SK-N-SH (cell line): ENCODE measurements at regions of chr15 and their contacts with region 1.

Region 1: GRCh38 chr15:90221246-90221900 is 12.4 kb downstream of the CIB1 start:
- DNase-seq: peak; percentile 86
- H3K4me3 ChIP-seq: no peak overlapping the region
- H3K27ac ChIP-seq: peak overlapping the region in 1 of 2 experiments; percentile 47; a peak in 1 of 4 replicates
- H3K4me1 ChIP-seq: peaks cover 0 to 11% of the 10 kb centered on the region in 2 experiments; a peak in 1 of 4 replicates
- H3K27me3 ChIP-seq: no peaks in the 10 kb centered on the region
- CTCF ChIP-seq: peak; percentile 65
- EP300 ChIP-seq: no peak
- RAD21 ChIP-seq: peak; percentile 90

Region 2: GRCh38 chr15:89888214-89888804 is 333.1 kb before region 1 on chr15:
- CTCF ChIA-PET with region 1: no interaction called
- POLR2A ChIA-PET with region 1: no interaction called
- DNase-seq: no peak
- H3K4me3 ChIP-seq: no peak overlapping the region
- H3K27ac ChIP-seq: no peak overlapping the region
- H3K4me1 ChIP-seq: peaks cover 0 to 2% of the 10 kb centered on the region in 2 experiments; a peak in 1 of 4 replicates
- H3K27me3 ChIP-seq: no peaks in the 10 kb centered on the region
- CTCF ChIP-seq: peak; percentile 67
- EP300 ChIP-seq: no peak
- RAD21 ChIP-seq: peak; percentile 59

Region 3: DNA sequence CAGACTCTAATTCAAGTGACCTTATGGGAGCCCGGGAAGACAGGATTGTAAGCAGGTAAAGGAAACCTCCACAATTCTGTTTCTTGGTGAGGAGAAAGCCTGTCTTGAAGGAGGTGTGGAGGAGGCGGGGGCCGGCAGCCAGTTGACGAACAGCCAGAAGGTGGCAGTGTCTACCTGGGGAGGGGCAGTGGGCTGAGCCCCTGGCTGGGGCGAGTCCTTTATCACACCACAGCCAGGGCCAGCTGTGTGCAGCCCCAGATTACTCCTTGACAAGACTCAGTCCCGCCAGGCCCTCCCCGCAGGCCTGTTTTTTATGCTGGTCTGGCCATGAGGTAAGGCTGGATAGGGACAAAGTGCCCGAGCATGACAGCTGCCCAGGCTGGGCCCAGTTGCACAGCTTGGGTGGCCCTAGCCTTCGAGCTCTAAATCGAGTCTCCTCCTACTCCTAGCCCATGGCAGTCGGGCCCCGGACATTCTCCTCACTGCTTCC is 78.2 kb before region 1 on chr15:
- CTCF ChIA-PET with region 1: interaction called, 37 read pairs
- POLR2A ChIA-PET with region 1: no interaction called
- DNase-seq: peak; percentile 93
- H3K4me3 ChIP-seq: no peak overlapping the region
- H3K27ac ChIP-seq: peak overlapping the region in 1 of 2 experiments; percentile 73; a peak in 2 of 4 replicates
- H3K4me1 ChIP-seq: peaks cover 0 to 14% of the 10 kb centered on the region in 2 experiments; a peak in 1 of 4 replicates
- H3K27me3 ChIP-seq: no peaks in the 10 kb centered on the region
- CTCF ChIP-seq: peak; percentile 67
- EP300 ChIP-seq: peak in 1 of 2 experiments; percentile 91; a peak in 2 of 4 replicates
- RAD21 ChIP-seq: peak; percentile 93

Region 4: DNA sequence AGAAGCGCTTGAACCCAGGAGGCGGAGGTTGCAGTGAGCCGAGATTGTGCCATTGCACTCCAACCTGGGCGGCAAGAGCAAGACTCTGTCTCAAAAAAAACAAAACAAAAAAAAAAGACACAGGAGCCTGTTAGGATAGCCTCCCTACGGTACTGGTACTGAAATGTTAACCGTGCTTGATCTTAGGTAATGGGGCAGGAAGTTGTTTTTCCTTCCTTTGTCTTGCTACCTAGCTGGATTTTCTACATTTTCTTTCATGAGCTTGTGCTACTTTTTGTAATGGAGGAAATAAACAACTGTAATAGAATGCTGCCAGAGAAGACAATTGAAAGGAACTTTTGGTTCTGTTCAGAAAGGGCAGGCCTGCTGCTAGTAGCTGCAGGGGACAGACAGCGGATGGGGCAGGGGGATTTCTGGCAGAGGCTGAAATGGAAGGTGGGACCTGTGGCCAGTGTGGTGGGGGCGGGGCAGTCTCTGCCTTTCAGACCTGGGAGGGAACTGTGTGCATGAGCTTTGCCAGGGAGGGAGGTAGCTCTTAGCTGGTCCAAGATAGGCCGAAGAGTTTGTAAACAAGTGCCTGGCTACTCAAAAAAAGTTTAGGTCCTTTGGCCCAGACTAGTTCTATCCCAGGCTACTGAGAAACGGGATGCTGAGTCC is 69.3 kb before region 1 on chr15:
- CTCF ChIA-PET with region 1: interaction called, 27 read pairs
- POLR2A ChIA-PET with region 1: no interaction called
- DNase-seq: no peak
- H3K4me3 ChIP-seq: no peak overlapping the region
- H3K27ac ChIP-seq: no peak overlapping the region
- H3K4me1 ChIP-seq: peaks cover 0 to 22% of the 10 kb centered on the region in 2 experiments; a peak in 1 of 4 replicates
- H3K27me3 ChIP-seq: no peaks in the 10 kb centered on the region
- CTCF ChIP-seq: no peak
- EP300 ChIP-seq: no peak
- RAD21 ChIP-seq: no peak

Region 5: DNA sequence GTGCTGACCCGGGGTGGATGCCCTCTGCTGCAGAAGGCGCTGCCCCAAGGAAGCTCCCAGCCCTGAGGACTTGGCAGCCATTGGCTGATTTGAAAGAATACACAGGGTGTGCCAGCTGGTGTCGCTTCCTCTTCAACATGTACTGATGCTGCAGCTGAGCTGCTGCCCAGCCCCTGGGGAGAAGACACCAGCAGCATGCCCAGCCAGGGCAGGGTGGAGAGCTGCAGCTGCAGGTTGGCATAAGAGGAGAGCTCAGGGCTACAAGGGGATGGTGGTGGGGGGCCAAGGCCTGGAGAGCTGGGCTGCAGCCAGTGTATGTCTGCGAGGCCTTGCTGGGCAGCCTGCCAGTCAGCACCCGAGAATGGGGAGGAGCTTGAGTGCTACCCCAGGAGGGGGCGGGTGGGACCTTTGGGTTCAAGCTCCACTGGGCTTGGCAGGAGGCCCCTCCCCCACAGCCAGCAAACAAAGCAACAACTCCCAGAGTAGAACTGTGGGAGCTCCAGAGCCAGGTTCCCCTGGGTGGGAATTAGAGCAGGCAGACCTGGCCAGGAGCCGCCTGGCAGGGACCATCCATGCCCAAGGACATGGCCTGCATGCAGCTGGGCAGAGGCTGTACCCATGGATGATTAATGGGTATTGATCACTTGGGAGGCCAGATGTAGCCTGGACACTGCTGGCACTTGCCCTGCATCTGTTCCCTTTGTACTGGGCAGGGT is 29.4 kb before region 1 on chr15:
- CTCF ChIA-PET with region 1: interaction called, 17 read pairs
- POLR2A ChIA-PET with region 1: no interaction called
- DNase-seq: peak; percentile 92
- H3K4me3 ChIP-seq: no peak overlapping the region
- H3K27ac ChIP-seq: peak overlapping the region; percentile 0 to 87; a peak in 3 of 4 replicates
- H3K4me1 ChIP-seq: peaks cover 8 to 41% of the 10 kb centered on the region in 2 experiments; a peak in 3 of 4 replicates
- H3K27me3 ChIP-seq: no peaks in the 10 kb centered on the region
- CTCF ChIP-seq: no peak
- EP300 ChIP-seq: peak in 1 of 2 experiments; percentile 66; a peak in 2 of 4 replicates
- RAD21 ChIP-seq: peak; percentile 32; the same call in 1 of the 2 replicates

Region 6: GRCh38 chr15:90201130-90201949 is 20.0 kb before region 1 on chr15 and contains the start of gene SEMA4B:
- CTCF ChIA-PET with region 1: interaction called, 74 read pairs
- POLR2A ChIA-PET with region 1: interaction called, 8 read pairs
- DNase-seq: peak; percentile 95
- H3K4me3 ChIP-seq: peak within 1 kb of the TSS; percentile 86 to 96
- H3K27ac ChIP-seq: peak within 1 kb of the TSS in 1 of 2 experiments; percentile 80; a peak in 2 of 4 replicates
- H3K4me1 ChIP-seq: peaks cover 3 to 44% of the 10 kb centered on the region in 2 experiments; a peak in 2 of 4 replicates
- H3K27me3 ChIP-seq: no peaks in the 10 kb centered on the region
- CTCF ChIP-seq: no peak
- EP300 ChIP-seq: no peak; a peak in 1 of 4 replicates
- RAD21 ChIP-seq: no peak
- polyA plus RNA-seq, gene SEMA4B: 15.2 and 38.9 TPM in 2 replicates

Region 7: GRCh38 chr15:90233376-90234095 is 12.2 kb after region 1 on chr15 and contains the start of gene CIB1:
- CTCF ChIA-PET with region 1: interaction called, 35 read pairs
- POLR2A ChIA-PET with region 1: no interaction called
- DNase-seq: peak; percentile 73
- H3K4me3 ChIP-seq: peak within 1 kb of the TSS; percentile 71 to 78
- H3K27ac ChIP-seq: peak within 1 kb of the TSS; percentile 67 to 92
- H3K4me1 ChIP-seq: peaks cover 5 to 9% of the 10 kb centered on the region in 2 experiments; a peak in 2 of 4 replicates
- H3K27me3 ChIP-seq: no peaks in the 10 kb centered on the region
- CTCF ChIP-seq: peak; percentile 52; the same call in 1 of the 2 replicates
- EP300 ChIP-seq: no peak
- RAD21 ChIP-seq: no peak
- polyA plus RNA-seq, gene CIB1: 74.7 and 87.9 TPM in 2 replicates

Region 8: GRCh38 chr15:90419738-90420406 is 198.5 kb after region 1 on chr15:
- CTCF ChIA-PET with region 1: no interaction called
- POLR2A ChIA-PET with region 1: no interaction called
- DNase-seq: no peak
- H3K4me3 ChIP-seq: peak overlapping the region; percentile 21 to 51; a peak in 3 of 4 replicates
- H3K27ac ChIP-seq: peak overlapping the region; percentile 76 to 96; a peak in 3 of 4 replicates
- H3K4me1 ChIP-seq: peaks cover 0 to 55% of the 10 kb centered on the region in 2 experiments; a peak in 3 of 4 replicates
- H3K27me3 ChIP-seq: no peaks in the 10 kb centered on the region
- CTCF ChIP-seq: no peak
- EP300 ChIP-seq: peak in 1 of 2 experiments; percentile 44; a peak in 1 of 4 replicates
- RAD21 ChIP-seq: no peak